ENCODE measurements at regions of chr15 and their contacts with region 1.

Region 1: GRCh38 chr15:65655026-65655425 is 33.3 kb downstream of the SLC24A1 start:
- DNase-seq: peak; percentile 83
- H3K4me3 ChIP-seq: no peak overlapping the region
- H3K27ac ChIP-seq: peak overlapping the region; percentile 31
- H3K4me1 ChIP-seq: peaks cover 34% of the 10 kb centered on the region
- H3K27me3 ChIP-seq: no peaks in the 10 kb centered on the region
- CTCF ChIP-seq: no peak

Region 2: DNA sequence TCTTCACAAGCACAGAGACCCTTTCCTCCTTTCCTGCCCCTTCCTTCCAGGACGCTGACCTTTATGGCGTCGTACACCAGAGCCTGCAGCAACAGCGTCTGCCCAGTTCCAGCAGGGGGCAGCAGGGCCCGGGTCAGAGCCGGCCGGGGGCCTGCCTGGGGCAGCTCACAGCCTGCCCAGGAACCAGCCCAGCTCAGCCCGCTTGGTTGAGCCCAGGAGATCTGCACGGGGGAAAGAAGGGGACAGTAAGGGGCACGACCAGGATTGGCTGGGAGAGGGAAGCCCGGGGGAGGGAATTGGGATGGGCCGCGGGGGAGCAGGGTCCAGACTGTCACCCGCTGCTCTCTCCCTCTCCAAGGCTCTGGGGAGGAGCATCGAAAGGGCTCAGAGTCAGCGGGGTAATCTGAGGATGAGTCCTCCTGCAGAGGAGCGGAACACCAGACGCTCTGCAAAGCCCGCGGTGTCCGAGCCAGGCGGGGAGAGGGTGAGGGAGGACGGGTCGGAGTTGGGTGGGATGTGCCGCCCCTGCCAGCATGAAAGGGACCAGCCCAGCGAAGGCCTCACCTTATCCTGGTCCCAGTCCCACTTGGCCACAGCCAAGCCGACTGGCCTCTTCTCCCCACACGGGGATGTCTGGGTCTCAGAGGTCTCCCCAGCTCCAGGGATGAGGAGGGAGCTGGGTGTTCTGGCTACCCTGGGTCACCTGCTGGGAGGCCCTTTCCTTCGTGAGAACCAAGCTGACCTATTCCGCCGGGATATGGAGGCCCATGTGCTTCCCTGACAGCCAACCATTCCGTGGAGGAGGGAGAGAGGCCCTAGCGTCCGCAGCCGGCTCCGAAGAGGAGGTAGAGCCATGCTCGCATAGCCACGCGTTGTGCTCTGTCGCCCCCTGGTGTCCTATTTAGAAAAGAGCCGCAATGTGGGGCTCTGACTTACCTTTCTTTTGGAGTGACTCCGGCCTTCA is 269.8 kb before region 1 on chr15:
- CTCF ChIA-PET with region 1: interaction called, 10 read pairs
- dilution Hi-C with region 1: no loop called
- in situ Hi-C with region 1: no loop called
- intact Hi-C with region 1: no loop called
- DNase-seq: peak; percentile 73
- H3K4me3 ChIP-seq: peak overlapping the region in 2 of 3 experiments; percentile 22 to 30
- H3K27ac ChIP-seq: no peak overlapping the region
- H3K4me1 ChIP-seq: peaks cover 11% of the 10 kb centered on the region
- H3K27me3 ChIP-seq: peaks cover 4% of the 10 kb centered on the region
- CTCF ChIP-seq: peak; percentile 83 to 93

Region 3: GRCh38 chr15:65610871-65611718 is 43.9 kb before region 1 on chr15 and contains the start of gene INTS14:
- CTCF ChIA-PET with region 1: no interaction called
- dilution Hi-C with region 1: no loop called
- in situ Hi-C with region 1: no loop called
- intact Hi-C with region 1: loop called (anchors 2 kb)
- DNase-seq: peak; percentile 95
- H3K4me3 ChIP-seq: peak within 1 kb of the TSS; percentile 67 to 85 (median 80)
- H3K27ac ChIP-seq: peak within 1 kb of the TSS; percentile 78
- H3K4me1 ChIP-seq: peaks cover 22% of the 10 kb centered on the region
- H3K27me3 ChIP-seq: no peaks in the 10 kb centered on the region
- CTCF ChIP-seq: peak in 1 of 2 donors; percentile 55
- total RNA-seq, gene INTS14: 38.9 to 41.8 TPM

Region 4: DNA sequence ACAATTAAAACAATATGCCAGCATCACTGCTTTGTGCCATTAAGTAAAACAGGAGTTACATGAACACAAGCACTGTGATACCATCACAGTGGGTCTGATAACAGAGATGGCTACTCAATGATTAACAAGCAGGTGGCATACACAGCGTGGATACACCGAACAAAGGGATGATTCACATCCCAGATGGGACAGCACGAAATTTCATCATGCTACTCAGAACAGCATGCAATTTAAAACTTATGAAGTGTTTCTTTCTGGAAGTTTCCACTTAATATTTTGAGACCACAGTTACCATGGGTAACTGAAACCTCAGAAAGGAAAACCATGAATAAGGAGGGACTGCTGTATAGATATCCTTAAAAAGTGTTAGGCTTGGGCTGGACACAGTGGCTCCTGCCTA is 11.2 kb after region 1 on chr15:
- CTCF ChIA-PET with region 1: interaction called, 15 read pairs
- dilution Hi-C with region 1: no loop called
- in situ Hi-C with region 1: no loop called
- intact Hi-C with region 1: no loop called
- DNase-seq: peak; percentile 92
- H3K4me3 ChIP-seq: no peak overlapping the region
- H3K27ac ChIP-seq: peak overlapping the region; percentile 64
- H3K4me1 ChIP-seq: peaks cover 7% of the 10 kb centered on the region
- H3K27me3 ChIP-seq: no peaks in the 10 kb centered on the region
- CTCF ChIP-seq: peak in 1 of 2 donors; percentile 24

Measured in mammary epithelial cell (primary cell).